SK-N-SH (cell line): ENCODE measurements at regions of chr3 and their contacts with region 1.

Region 1: GRCh38 chr3:159988617-159989271 is at the start of gene IL12A:
- DNase-seq: peak; percentile 92
- H3K4me3 ChIP-seq: peak within 1 kb of the TSS; percentile 71 to 87
- H3K27ac ChIP-seq: no peak within 1 kb of the TSS
- H3K4me1 ChIP-seq: peaks cover 0 to 5% of the 10 kb centered on the region in 2 experiments; a peak in 1 of 4 replicates
- H3K27me3 ChIP-seq: no peaks in the 10 kb centered on the region
- CTCF ChIP-seq: peak; percentile 97
- EP300 ChIP-seq: no peak
- RAD21 ChIP-seq: peak; percentile 50
- polyA plus RNA-seq, gene IL12A: 0.97 and 1.9 TPM in 2 replicates

Region 2: GRCh38 chr3:159616212-159616825 is 372.4 kb before region 1 on chr3:
- CTCF ChIA-PET with region 1: no interaction called
- POLR2A ChIA-PET with region 1: no interaction called
- DNase-seq: no peak
- H3K4me3 ChIP-seq: no peak overlapping the region
- H3K27ac ChIP-seq: no peak overlapping the region
- H3K4me1 ChIP-seq: peaks cover 0 to 3% of the 10 kb centered on the region in 2 experiments; a peak in 2 of 4 replicates
- H3K27me3 ChIP-seq: no peaks in the 10 kb centered on the region
- CTCF ChIP-seq: peak; percentile 76
- EP300 ChIP-seq: no peak
- RAD21 ChIP-seq: peak; percentile 70

Region 3: GRCh38 chr3:159839561-159840379 is 149.0 kb before region 1 on chr3:
- CTCF ChIA-PET with region 1: interaction called, 15 read pairs
- POLR2A ChIA-PET with region 1: interaction called, 3 read pairs
- DNase-seq: peak; percentile 81
- H3K4me3 ChIP-seq: peak within 1 kb of the TSS; percentile 65 to 67
- H3K27ac ChIP-seq: peak within 1 kb of the TSS; percentile 47 to 99; a peak in 3 of 4 replicates
- H3K4me1 ChIP-seq: peaks cover 21 to 31% of the 10 kb centered on the region in 2 experiments; a peak in 3 of 4 replicates
- H3K27me3 ChIP-seq: no peaks in the 10 kb centered on the region
- CTCF ChIP-seq: no peak
- EP300 ChIP-seq: peak in 1 of 2 experiments; percentile 45; a peak in 1 of 4 replicates
- RAD21 ChIP-seq: peak; percentile 39

Region 4: DNA sequence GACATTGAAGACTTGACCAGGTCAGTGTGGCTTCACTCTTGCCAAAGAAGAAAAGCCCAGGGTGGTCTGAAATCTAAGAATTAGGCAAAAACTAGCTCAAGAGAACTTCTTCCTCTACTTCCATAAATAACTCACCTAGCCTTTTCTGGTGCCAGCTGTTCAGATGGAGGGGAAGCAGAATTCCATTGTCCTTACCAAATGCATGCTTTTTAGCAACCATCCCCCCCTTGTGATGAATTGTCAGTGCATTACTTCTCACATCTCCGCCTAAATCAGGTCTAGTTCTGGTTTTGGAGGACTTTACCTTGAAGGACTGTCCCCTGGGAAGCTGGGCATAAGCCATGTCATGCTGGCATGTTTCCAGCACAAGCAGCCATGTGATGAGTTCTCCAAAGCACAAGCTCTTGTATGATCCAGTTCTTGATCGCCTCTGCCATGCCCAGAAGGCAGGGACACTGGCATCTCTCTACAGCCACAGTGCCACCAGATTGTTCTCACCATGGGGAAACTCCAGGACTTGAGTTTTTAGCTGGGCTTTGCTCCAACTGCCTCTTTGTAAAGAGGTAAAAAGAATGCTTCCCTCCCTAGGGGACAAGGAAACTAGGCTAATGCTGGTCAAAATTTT is 96.5 kb before region 1 on chr3:
- CTCF ChIA-PET with region 1: interaction called, 39 read pairs
- POLR2A ChIA-PET with region 1: no interaction called
- DNase-seq: no peak
- H3K4me3 ChIP-seq: no peak overlapping the region
- H3K27ac ChIP-seq: peak overlapping the region in 1 of 2 experiments; percentile 58; a peak in 2 of 4 replicates
- H3K4me1 ChIP-seq: peaks cover 0 to 32% of the 10 kb centered on the region in 2 experiments; a peak in 3 of 4 replicates
- H3K27me3 ChIP-seq: no peaks in the 10 kb centered on the region
- CTCF ChIP-seq: no peak
- EP300 ChIP-seq: no peak
- RAD21 ChIP-seq: no peak

Region 5: GRCh38 chr3:159897331-159898075 is 91.2 kb before region 1 on chr3:
- CTCF ChIA-PET with region 1: interaction called, 18 read pairs
- POLR2A ChIA-PET with region 1: no interaction called
- DNase-seq: peak; percentile 21
- H3K4me3 ChIP-seq: no peak overlapping the region
- H3K27ac ChIP-seq: peak overlapping the region; percentile 5 to 69; a peak in 3 of 4 replicates
- H3K4me1 ChIP-seq: peaks cover 0 to 27% of the 10 kb centered on the region in 2 experiments; a peak in 3 of 4 replicates
- H3K27me3 ChIP-seq: no peaks in the 10 kb centered on the region
- CTCF ChIP-seq: no peak
- EP300 ChIP-seq: peak in 1 of 2 experiments; percentile 59; a peak in 2 of 4 replicates
- RAD21 ChIP-seq: no peak

Region 6: GRCh38 chr3:159971311-159971710 is 17.4 kb before region 1 on chr3:
- CTCF ChIA-PET with region 1: interaction called, 54 read pairs
- POLR2A ChIA-PET with region 1: no interaction called
- DNase-seq: no peak
- H3K4me3 ChIP-seq: no peak overlapping the region
- H3K27ac ChIP-seq: no peak overlapping the region
- H3K4me1 ChIP-seq: no peaks in the 10 kb centered on the region
- H3K27me3 ChIP-seq: no peaks in the 10 kb centered on the region
- CTCF ChIP-seq: no peak
- EP300 ChIP-seq: no peak
- RAD21 ChIP-seq: no peak

Region 7: GRCh38 chr3:159978353-159978752 is 10.4 kb before region 1 on chr3:
- CTCF ChIA-PET with region 1: interaction called, 54 read pairs
- POLR2A ChIA-PET with region 1: no interaction called
- DNase-seq: peak; percentile 13
- H3K4me3 ChIP-seq: no peak overlapping the region
- H3K27ac ChIP-seq: no peak overlapping the region; a peak in 1 of 4 replicates
- H3K4me1 ChIP-seq: no peaks in the 10 kb centered on the region; a peak in 2 of 4 replicates
- H3K27me3 ChIP-seq: no peaks in the 10 kb centered on the region
- CTCF ChIP-seq: no peak
- EP300 ChIP-seq: no peak
- RAD21 ChIP-seq: no peak

Region 8: DNA sequence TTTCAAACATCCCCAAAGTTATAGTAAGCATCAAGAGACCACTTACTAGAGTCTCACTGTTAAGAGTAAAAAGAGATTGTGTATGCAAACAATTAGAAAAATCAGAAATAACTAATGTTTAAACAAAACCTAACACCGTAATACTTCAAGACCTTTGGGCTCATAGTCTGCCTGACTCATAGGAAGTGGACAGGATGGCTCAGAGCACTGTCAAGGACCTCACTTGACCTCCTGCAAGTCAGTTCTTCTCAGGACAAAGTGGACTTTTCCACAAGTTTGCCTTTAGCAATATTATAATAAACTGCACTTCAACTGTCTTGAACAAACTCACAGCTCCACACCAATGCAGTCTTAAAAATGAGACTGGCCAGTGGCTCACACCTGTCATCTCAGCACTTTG is 34.7 kb after region 1 on chr3:
- CTCF ChIA-PET with region 1: no interaction called
- POLR2A ChIA-PET with region 1: no interaction called
- DNase-seq: no peak
- H3K4me3 ChIP-seq: no peak overlapping the region
- H3K27ac ChIP-seq: no peak overlapping the region
- H3K4me1 ChIP-seq: no peaks in the 10 kb centered on the region
- H3K27me3 ChIP-seq: no peaks in the 10 kb centered on the region
- CTCF ChIP-seq: no peak
- EP300 ChIP-seq: no peak
- RAD21 ChIP-seq: no peak